ENCODE measurements at regions of chr21 and their contacts with region 1.

Region 1: DNA sequence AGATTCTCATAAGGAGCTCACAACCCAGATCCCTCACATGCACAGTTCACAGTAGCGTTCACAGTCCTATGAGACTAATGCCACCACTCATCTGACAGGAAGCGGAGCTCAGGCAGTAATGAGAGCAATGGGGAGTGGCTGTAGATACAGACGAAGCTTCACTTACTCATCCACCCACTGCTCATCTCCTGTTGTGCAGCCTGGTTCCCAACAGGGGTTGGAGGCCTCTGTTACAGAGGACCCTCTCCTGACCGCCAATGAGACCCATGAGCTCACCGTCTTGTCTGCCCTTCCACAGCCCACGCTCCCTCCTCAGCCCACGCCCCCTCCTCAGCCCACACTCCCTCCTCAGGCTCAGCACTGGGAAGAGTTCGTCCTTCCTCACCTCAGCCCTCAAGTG is 39.6 kb downstream of the RSPH1 start:
- DNase-seq: no peak
- ATAC-seq: no peak
- H3K4me3 ChIP-seq: no peak overlapping the region
- H3K27ac ChIP-seq: no peak overlapping the region
- H3K4me1 ChIP-seq: no peaks in the 10 kb centered on the region; a peak in 1 of 4 replicates
- H3K27me3 ChIP-seq: no peaks in the 10 kb centered on the region
- CTCF ChIP-seq: no peak
- POLR2A ChIP-seq: no peak
- RAD21 ChIP-seq: no peak

Region 2: GRCh38 chr21:42337830-42338728 is 118.4 kb before region 1 on chr21:
- CTCF ChIA-PET with region 1: no interaction called
- POLR2A ChIA-PET with region 1: no interaction called
- RAD21 ChIA-PET with region 1: no interaction called
- intact Hi-C with region 1: loop called (anchors 10 kb)
- DNase-seq: no peak
- ATAC-seq: peak; percentile 87
- H3K4me3 ChIP-seq: no peak overlapping the region
- H3K27ac ChIP-seq: no peak overlapping the region
- H3K4me1 ChIP-seq: peaks cover 0 to 10% of the 10 kb centered on the region in 2 experiments; a peak in 3 of 4 replicates
- H3K27me3 ChIP-seq: no peaks in the 10 kb centered on the region
- CTCF ChIP-seq: peak; percentile 34 to 77 (median 73); a peak in 5 of 6 replicates
- POLR2A ChIP-seq: no peak
- RAD21 ChIP-seq: peak; percentile 31; the same call in 1 of the 2 replicates

Region 3: DNA sequence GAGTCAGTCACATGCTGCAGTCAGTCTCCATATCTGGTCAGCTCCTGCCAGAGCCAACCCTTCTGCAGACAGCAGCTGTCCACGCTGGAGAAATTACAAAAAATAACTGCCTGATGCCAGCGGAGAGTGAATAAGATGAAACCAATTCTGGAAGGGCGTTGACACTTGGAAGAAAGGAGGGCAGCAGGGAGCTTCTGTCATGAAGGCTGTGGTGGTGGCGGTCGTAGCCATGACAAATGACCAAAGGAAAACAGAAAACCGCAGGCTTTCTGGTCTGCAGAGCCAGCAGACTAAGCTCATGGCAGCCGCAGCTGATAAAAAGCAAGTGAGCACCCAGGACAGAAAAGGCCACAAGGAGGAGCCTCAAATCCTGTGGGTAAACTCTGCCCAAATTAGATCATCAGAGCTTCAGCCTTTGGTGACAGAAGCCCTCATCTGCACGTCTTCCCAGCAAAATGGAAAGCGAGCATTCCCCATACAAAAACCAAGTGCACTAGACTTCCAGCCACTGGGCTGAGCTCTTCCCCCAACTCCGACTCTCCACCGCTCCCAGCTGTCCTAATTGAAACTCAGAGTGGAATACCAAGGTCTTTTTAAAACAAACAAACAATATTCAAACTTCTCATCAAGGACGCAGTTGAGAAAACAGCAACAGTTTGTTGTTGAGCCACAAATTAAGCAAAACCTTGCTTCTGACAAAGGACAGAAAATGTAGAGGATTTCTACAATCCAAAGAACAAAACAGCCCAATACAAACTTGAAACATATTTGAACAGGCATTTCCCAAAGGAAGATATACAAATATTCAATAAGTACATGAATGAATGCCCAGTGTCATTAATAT is 10.9 kb after region 1 on chr21:
- CTCF ChIA-PET with region 1: no interaction called
- POLR2A ChIA-PET with region 1: no interaction called
- RAD21 ChIA-PET with region 1: no interaction called
- intact Hi-C with region 1: no loop called
- DNase-seq: peak; percentile 23
- ATAC-seq: peak; percentile 65
- H3K4me3 ChIP-seq: no peak overlapping the region
- H3K27ac ChIP-seq: no peak overlapping the region
- H3K4me1 ChIP-seq: peaks cover 3 to 15% of the 10 kb centered on the region in 2 experiments; a peak in 1 of 4 replicates
- H3K27me3 ChIP-seq: no peaks in the 10 kb centered on the region
- CTCF ChIP-seq: peak; percentile 31 to 37 (median 36); a peak in 3 of 6 replicates
- POLR2A ChIP-seq: no peak
- RAD21 ChIP-seq: peak; percentile 64

Region 4: DNA sequence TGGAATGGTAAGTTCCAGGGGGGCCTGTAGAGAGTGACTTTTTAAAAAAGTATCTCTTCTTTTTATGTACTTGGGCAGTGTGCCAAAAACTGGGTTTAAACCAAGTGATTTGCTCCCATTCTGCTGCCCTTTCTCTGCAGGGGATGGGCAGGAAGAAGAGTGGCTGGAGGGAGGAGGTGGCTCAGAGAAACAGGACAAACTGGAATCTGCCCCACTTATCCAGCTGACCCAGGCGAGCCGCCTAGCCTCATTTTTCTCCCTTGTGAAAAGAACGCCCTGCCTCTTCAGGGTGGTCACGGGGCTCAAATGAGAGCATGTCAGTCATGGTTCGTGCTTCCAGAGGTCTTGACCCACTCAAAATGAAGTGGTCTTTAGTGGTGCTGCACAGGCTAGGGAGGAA is 59.7 kb after region 1 on chr21:
- CTCF ChIA-PET with region 1: no interaction called
- POLR2A ChIA-PET with region 1: no interaction called
- RAD21 ChIA-PET with region 1: no interaction called
- intact Hi-C with region 1: loop called (anchors 5 kb)
- DNase-seq: peak; percentile 48
- ATAC-seq: no peak
- H3K4me3 ChIP-seq: peak overlapping the region in 1 of 2 experiments; percentile 13; a peak in 1 of 4 replicates
- H3K27ac ChIP-seq: peak overlapping the region; percentile 30
- H3K4me1 ChIP-seq: peaks cover 46 to 57% of the 10 kb centered on the region in 2 experiments
- H3K27me3 ChIP-seq: no peaks in the 10 kb centered on the region
- CTCF ChIP-seq: no peak
- POLR2A ChIP-seq: no peak
- RAD21 ChIP-seq: no peak